Activated CD8-positive, alpha-beta memory T cell treated with anti-CD3 and anti-CD28 coated beads, Interleukin-2, amount 10 ng/mL, durations not matched to agents 7 days and 5 days (primary cell): ENCODE measurements at regions of chr16 and their contacts with region 1.

Region 1: DNA sequence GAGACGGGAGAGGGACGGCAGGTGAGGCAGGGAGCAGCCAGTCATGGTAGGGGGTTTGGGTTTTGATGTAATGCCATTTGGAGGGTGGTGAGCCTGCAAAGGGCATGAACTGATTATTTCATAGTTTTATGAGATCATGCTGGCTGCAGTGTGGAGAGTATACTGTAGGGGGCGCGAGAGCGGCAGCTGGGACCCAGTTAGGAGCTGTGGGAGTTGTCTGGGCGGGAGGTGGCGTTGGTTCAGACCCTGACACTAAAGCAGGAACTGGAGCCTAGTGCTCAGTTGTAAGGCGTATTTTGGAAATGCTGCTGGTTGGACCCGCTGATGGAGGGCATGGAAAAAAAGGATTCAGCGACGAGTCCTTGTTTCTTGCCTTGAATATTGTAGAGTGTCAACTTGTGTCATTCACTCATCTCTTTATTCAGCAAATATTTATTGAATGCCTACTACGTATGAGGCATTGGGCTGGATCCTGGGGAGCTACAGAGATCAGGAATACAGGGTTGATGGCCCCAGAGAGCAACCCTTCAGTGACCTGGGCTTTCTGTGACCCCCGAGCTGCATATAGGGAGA is 23.7 kb upstream of the KDM8 start:
- DNase-seq: peak; percentile 93
- ATAC-seq: peak; percentile 98
- H3K4me3 Mint-ChIP-seq: no peak overlapping the region
- H3K27ac Mint-ChIP-seq: peak overlapping the region; percentile 65
- H3K4me1 Mint-ChIP-seq: peaks cover 23% of the 10 kb centered on the region
- H3K27me3 Mint-ChIP-seq: peaks cover 13% of the 10 kb centered on the region

Region 2: DNA sequence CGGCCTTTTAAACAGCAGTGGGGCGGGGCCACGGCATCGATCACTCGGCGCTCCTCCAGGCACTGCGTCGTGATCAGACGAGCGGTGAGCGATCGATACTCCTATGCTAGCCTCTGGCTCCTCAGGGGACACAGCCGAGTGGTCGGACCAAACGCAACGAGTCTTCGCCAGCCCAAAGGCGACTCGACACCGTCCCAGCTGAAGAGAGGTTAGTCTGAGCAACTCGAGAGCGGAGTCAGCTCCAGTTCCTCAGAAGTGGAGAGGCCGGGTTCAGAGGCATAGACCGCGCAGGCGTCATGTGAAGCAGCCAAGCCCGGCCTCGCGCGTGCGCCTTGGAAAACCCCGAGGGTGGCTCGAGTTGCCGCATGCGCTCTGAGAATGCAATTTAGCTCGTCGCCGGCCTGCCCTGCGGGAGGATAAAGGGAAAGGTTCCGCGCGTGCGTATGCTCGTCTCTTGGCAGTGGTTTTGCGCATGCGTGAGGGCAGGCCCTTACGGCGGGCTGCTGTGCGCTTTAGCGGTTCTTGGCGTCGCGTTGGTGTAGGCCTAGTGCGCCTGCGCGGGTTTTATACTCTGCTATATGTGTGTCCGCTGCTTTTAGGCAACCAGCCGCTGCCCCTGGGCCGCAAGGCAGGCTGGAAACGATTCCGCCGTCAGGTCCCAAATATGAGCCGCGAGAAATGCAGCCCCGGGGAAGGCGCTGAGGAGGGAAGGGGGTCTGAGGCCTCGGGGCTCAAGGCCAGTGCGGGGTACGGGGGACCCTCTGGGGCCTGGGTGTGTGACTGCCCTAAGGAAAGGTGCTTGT is 24.0 kb after region 1 on chr16 and contains the start of gene KDM8:
- CTCF ChIA-PET with region 1: interaction called, 66 read pairs
- DNase-seq: peak; percentile 100
- ATAC-seq: peak; percentile 94
- H3K4me3 Mint-ChIP-seq: peak within 1 kb of the TSS; percentile 95
- H3K27ac Mint-ChIP-seq: peak within 1 kb of the TSS; percentile 100
- H3K4me1 Mint-ChIP-seq: peaks cover 48% of the 10 kb centered on the region
- H3K27me3 Mint-ChIP-seq: no peaks in the 10 kb centered on the region
- total RNA-seq, gene KDM8: 14.8 to 18.2 TPM

Region 3: DNA sequence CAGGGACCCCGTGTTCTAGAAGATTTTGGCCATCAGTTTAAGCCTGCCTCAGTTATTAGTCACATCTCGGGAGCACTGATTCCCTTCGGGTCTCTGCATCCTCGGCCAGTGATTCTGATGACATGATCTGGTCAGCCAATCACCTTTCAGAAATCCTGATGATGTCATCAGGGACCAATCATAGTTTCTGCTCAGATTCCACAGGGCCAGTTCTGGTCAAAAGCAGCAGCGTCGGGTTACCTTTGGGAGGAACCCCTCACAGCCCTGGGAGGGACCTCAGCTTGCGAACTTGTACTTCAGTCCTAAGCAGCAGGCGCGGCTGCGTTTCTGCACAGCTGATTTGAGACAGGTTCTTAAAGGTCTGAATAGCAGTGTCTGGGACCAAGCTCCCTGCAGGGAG is 37.7 kb after region 1 on chr16:
- CTCF ChIA-PET with region 1: interaction called, 11 read pairs
- DNase-seq: no peak
- ATAC-seq: no peak
- H3K4me3 Mint-ChIP-seq: no peak overlapping the region
- H3K27ac Mint-ChIP-seq: no peak overlapping the region
- H3K4me1 Mint-ChIP-seq: no peaks in the 10 kb centered on the region
- H3K27me3 Mint-ChIP-seq: no peaks in the 10 kb centered on the region

Region 4: GRCh38 chr16:27314161-27314723 is 134.7 kb after region 1 on chr16:
- CTCF ChIA-PET with region 1: interaction called, 36 read pairs
- DNase-seq: peak; percentile 85
- ATAC-seq: peak; percentile 37
- H3K4me3 Mint-ChIP-seq: peak overlapping the region; percentile 94
- H3K27ac Mint-ChIP-seq: peak overlapping the region; percentile 94
- H3K4me1 Mint-ChIP-seq: peaks cover 48% of the 10 kb centered on the region
- H3K27me3 Mint-ChIP-seq: no peaks in the 10 kb centered on the region

Region 5: DNA sequence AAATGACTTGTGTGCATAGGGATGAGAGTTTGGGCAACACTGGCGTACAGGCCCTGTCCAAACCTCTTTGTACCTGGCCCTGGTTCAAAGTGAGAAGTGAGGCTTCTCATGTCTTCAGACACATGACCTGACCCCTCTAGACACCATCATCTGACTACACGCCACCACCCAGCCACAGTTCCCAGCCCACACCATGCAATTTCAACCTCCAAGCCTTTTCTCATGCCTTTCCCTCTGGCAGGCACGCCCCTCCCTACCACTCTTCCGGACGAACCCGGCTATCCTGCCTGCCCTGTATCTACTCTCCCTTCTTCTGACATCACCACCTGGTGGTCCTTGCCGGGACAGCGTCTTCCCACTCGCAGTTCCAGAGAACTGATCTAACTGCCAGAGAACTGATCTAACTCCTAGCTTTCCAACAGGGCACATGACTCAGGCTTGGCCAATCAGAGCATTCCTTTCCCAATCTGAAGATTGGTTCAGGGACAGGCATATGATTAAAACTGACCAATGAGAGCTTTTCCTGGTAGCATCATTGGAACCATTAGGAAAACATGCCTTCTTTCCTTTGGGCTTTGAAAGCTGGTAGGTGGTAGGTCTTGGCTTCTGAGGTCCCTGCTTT is 195.3 kb after region 1 on chr16:
- CTCF ChIA-PET with region 1: interaction called, 104 read pairs
- DNase-seq: peak; percentile 71
- ATAC-seq: peak; percentile 48
- H3K4me3 Mint-ChIP-seq: no peak overlapping the region
- H3K27ac Mint-ChIP-seq: no peak overlapping the region
- H3K4me1 Mint-ChIP-seq: peaks cover 27% of the 10 kb centered on the region
- H3K27me3 Mint-ChIP-seq: no peaks in the 10 kb centered on the region

Region 6: DNA sequence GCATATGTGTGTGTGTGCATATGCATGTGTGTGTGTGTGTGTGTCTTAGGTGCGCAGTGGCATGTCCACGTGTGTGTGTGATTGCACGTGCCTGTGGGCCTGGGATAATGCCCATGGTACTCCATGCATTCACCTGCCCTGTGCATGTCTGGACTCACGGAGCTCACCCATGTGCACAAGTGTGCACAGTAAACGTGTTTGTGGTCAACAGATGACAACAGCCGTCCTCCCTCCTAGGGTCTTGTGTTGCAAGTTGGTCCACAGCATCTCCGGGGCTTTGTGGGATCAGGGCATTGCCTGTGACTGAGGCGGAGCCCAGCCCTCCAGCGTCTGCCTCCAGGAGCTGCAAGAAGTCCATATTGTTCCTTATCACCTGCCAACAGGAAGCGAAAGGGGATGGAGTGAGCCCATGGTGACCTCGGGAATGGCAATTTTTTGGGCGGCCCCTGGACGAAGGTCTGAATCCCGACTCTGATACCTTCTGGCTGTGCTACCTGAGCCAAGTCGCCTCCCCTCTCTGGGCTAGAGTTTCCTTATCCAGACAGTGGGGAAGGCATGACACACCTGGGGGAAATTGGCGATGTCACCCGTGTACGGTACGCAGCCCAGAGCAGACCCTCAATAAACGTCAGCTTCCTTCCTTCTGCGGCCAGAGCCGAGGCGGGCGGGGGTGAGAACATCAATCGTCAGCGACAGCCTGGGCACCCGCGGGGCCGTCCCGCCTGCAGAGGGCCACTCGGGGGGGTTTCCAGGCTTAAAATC is 270.0 kb after region 1 on chr16:
- CTCF ChIA-PET with region 1: interaction called, 10 read pairs
- DNase-seq: peak; percentile 91
- ATAC-seq: peak; percentile 75
- H3K4me3 Mint-ChIP-seq: peak overlapping the region; percentile 42
- H3K27ac Mint-ChIP-seq: peak overlapping the region; percentile 92
- H3K4me1 Mint-ChIP-seq: peaks cover 69% of the 10 kb centered on the region
- H3K27me3 Mint-ChIP-seq: no peaks in the 10 kb centered on the region